K562 (cell line): ENCODE measurements at regions of chr20 and their contacts with region 1.

Region 1: DNA sequence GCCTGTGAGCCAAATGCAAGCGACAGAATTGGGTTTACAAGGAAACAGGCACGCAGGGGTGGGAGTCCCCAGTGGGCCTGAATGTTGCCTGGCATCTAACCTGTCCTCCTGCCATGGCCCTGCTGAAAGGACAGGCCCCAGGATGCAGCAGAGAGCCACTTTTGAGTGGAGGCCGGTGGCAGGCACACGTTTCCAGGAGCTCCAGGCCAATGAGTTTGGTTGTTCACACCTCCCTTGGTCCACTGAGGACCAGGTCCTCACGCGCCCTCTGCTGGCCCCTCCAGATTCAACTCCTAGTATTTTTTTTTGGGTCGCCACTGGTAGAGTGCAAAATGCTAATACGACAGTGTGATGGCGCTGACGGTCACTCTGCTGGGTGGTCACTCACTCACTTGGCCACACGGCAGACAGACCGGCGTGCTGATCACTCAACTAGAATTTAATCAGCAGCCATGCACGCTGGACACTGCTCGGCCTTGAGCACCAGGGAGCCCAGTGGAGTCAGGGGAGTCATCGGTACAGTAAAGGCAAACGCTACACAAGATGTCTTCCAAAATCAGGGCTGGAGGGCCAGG is 81.7 kb upstream of the NFATC2 start:
- DNase-seq: peak; percentile 80 to 90 (median 83)
- ATAC-seq: peak; percentile 97
- H3K4me3 ChIP-seq: no peak overlapping the region
- H3K27ac ChIP-seq: no peak overlapping the region
- H3K4me1 ChIP-seq: peaks cover 3 to 9% of the 10 kb centered on the region in 2 experiments; a peak in 4 of 5 replicates
- H3K27me3 ChIP-seq: peaks cover 2 to 34% of the 10 kb centered on the region in 2 experiments; a peak in 4 of 5 replicates
- CTCF ChIP-seq: peak; percentile 89 to 97 (median 95)
- EP300 ChIP-seq: no peak
- POLR2A ChIP-seq: no peak
- RAD21 ChIP-seq: peak; percentile 74 to 84

Region 2: DNA sequence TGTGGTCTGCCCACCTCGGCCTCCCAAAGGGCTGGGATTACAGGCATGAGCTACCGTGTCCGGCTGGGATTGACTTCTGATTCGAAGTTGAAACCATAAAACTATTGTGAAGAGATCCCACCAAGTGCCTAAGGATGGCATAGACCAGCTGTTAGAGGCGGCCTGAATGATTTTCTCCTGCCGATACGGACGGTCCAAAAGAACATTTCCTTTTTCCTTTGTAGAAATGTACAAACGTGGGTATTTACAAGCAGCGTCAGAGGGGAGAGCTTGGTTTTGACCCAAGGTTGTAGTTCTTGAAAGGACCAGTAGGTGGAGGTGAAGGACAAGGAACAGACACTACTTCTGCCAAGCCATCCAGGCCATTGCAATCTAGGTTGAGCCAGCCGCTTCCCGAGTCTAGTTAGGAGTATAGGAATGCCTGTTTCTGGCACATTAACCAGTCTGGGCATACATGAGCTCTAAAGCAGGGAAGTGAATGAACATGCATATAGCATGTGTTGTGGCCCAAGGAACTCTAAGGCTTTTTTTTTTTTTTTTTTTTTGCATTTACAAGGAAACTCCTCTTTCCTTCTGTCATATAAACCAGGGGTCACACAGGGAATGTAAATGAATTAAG is 636.5 kb before region 1 on chr20:
- CTCF ChIA-PET with region 1: interaction called, 3 read pairs
- POLR2A ChIA-PET with region 1: no interaction called
- in situ Hi-C with region 1: loop called (anchors 5 kb)
- intact Hi-C with region 1: loop called (anchors 10 kb)
- DNase-seq: peak; percentile 71 to 85 (median 76)
- ATAC-seq: peak; percentile 97
- H3K4me3 ChIP-seq: no peak overlapping the region
- H3K27ac ChIP-seq: no peak overlapping the region
- H3K4me1 ChIP-seq: 0 out of 5 replicates have a peak, but pooled peaks cover 0 to 2% of the 10 kb centered on the region in 2 experiments
- H3K27me3 ChIP-seq: peaks cover 15 to 28% of the 10 kb centered on the region in 2 experiments; a peak in 4 of 5 replicates
- CTCF ChIP-seq: peak; percentile 80 to 95 (median 90)
- EP300 ChIP-seq: no peak
- POLR2A ChIP-seq: no peak
- RAD21 ChIP-seq: peak; percentile 86 to 93

Region 3: DNA sequence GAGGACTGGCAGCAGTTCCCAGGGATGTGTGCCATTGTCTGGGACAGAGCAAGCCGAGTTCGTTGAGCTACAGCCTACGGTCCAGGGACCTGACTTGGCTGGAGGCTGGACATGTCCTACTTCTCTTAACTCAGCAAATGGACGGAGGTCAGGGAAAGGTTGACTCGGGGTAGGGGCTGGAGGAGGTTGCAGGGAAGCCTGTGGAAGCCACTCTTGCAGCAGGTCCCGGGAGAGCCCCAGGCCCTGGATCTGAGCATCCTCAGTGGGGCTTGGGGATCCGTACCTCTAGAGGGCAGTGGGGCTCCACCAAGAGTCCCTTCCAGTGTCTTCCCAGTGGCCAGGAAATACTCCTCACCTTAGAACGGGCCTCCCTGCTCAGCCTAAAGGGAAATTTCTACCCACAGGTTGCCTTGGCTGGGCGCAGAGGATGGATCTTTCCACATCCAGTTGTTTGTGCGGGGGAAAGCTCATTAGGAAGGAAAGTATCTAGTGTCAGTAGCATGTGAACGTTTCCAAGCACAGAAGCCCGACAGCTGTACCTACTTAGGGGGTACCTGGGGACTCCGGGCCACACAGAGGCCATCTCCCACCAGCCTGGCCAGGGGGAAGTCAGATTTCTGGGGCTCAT is 252.0 kb before region 1 on chr20:
- CTCF ChIA-PET with region 1: interaction called, 9 read pairs
- POLR2A ChIA-PET with region 1: no interaction called
- in situ Hi-C with region 1: loop called (anchors 5 kb)
- intact Hi-C with region 1: loop called (anchors 1 kb)
- DNase-seq: peak; percentile 71 to 85 (median 76)
- ATAC-seq: peak; percentile 94
- H3K4me3 ChIP-seq: no peak overlapping the region
- H3K27ac ChIP-seq: no peak overlapping the region
- H3K4me1 ChIP-seq: peaks cover 17 to 26% of the 10 kb centered on the region in 2 experiments
- H3K27me3 ChIP-seq: peaks cover 8 to 22% of the 10 kb centered on the region in 2 experiments; a peak in 4 of 5 replicates
- CTCF ChIP-seq: peak; percentile 88 to 90 (median 89)
- EP300 ChIP-seq: no peak
- POLR2A ChIP-seq: no peak
- RAD21 ChIP-seq: peak; percentile 87 to 92

Region 4: GRCh38 chr20:51404298-51405060 is 219.8 kb before region 1 on chr20:
- CTCF ChIA-PET with region 1: no interaction called
- POLR2A ChIA-PET with region 1: no interaction called
- in situ Hi-C with region 1: no loop called
- intact Hi-C with region 1: no loop called
- DNase-seq: no peak
- ATAC-seq: no peak
- H3K4me3 ChIP-seq: no peak overlapping the region
- H3K27ac ChIP-seq: no peak overlapping the region
- H3K4me1 ChIP-seq: no peaks in the 10 kb centered on the region; a peak in 2 of 5 replicates
- H3K27me3 ChIP-seq: no peaks in the 10 kb centered on the region
- CTCF ChIP-seq: no peak
- EP300 ChIP-seq: no peak
- POLR2A ChIP-seq: no peak
- RAD21 ChIP-seq: no peak

Region 5: DNA sequence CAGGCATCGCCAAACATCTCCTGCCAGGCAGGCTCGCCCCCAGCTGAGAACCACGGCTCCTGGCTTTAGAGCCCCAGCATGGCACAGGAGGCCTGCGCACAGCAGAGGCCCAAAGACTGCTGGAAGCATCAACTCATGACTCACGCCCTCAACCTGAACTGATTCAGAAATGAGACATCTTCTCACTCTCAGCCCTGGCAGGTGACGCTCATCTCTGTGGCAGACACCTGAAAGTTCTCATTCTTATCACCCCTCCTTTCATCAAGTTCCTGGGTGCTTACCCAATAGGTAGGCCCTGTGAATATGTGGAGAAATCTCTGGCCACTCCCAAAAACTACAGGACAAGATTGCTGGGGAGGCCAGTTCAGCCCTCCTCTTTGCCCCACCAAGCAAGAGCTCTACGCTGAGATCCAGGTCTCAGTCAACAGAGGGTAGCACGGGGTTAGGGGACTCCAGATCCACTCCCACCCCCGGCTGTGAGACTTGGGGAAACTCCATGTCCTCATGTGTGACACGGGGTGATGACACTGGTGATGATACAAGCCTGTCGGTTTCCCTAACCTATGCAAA is 93.0 kb before region 1 on chr20:
- CTCF ChIA-PET with region 1: no interaction called
- POLR2A ChIA-PET with region 1: no interaction called
- in situ Hi-C with region 1: no loop called
- intact Hi-C with region 1: no loop called
- DNase-seq: no peak
- ATAC-seq: no peak
- H3K4me3 ChIP-seq: no peak overlapping the region
- H3K27ac ChIP-seq: no peak overlapping the region
- H3K4me1 ChIP-seq: peaks cover 27 to 38% of the 10 kb centered on the region in 2 experiments
- H3K27me3 ChIP-seq: no peaks in the 10 kb centered on the region
- CTCF ChIP-seq: no peak
- EP300 ChIP-seq: no peak
- POLR2A ChIP-seq: no peak
- RAD21 ChIP-seq: no peak

Region 6: GRCh38 chr20:51609251-51609650 is 15.0 kb before region 1 on chr20:
- CTCF ChIA-PET with region 1: no interaction called
- POLR2A ChIA-PET with region 1: no interaction called
- in situ Hi-C with region 1: no loop called
- intact Hi-C with region 1: no loop called
- DNase-seq: no peak
- ATAC-seq: no peak
- H3K4me3 ChIP-seq: no peak overlapping the region
- H3K27ac ChIP-seq: no peak overlapping the region
- H3K4me1 ChIP-seq: peaks cover 0 to 4% of the 10 kb centered on the region in 2 experiments; a peak in 2 of 5 replicates
- H3K27me3 ChIP-seq: peaks cover 42 to 45% of the 10 kb centered on the region in 2 experiments
- CTCF ChIP-seq: no peak
- EP300 ChIP-seq: no peak
- POLR2A ChIP-seq: no peak
- RAD21 ChIP-seq: no peak